ENCODE measurements at regions of chr7 and their contacts with region 1.

Region 1: DNA sequence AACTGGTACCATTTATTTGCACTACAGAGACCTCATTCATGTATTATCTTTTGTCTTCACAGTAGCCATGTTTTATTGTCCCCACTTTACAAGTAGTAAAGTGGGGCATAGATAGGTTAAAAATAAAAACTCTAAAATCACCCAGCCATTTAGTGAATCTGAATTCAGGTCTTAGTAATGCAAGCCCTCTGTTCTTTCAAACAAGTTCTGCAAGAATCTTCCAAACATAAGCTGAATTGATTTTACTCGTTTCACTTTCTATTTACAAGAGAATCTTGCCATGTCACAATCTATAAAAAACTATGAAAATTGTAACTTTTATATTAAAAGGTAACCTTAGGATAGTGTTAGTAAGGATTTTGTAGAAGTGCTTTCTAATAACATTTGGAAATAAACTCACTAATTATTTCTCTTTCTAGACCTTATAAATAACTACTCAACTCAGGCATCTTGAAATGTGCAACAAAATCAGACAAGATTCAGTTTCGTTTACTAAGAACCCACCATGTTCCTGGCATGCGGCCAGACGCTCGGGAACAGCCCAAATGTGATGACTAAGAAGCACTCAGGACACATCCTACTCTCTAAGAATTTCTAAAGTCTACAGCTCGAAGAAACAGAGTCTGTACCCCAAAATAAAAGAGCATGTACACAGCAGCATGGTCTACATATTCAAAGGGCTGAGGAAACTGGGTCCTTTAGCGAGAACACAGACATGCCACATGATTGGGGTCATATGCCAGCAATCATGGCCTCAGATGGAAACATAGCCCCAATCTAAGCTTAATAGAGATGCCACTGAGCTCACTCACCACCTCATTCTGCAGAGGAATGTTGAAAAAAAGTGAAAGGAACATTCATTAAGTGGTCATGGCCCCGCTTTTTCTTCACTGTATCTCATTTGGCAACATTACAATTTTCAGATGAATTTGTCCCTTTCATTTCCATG is 167.6 kb downstream of the AMPH start:
- DNase-seq: no peak
- H3K4me3 ChIP-seq: no peak overlapping the region
- H3K27ac ChIP-seq: no peak overlapping the region
- H3K4me1 ChIP-seq: no peaks in the 10 kb centered on the region
- H3K27me3 ChIP-seq: no peaks in the 10 kb centered on the region
- CTCF ChIP-seq: no peak
- POLR2A ChIP-seq: no peak

Region 2: GRCh38 chr7:36986429-36987362 is 1476.9 kb before region 1 on chr7:
- intact Hi-C with region 1: loop called (anchors 10 kb)
- DNase-seq: no peak
- H3K4me3 ChIP-seq: no peak overlapping the region
- H3K27ac ChIP-seq: no peak overlapping the region
- H3K4me1 ChIP-seq: no peaks in the 10 kb centered on the region
- H3K27me3 ChIP-seq: no peaks in the 10 kb centered on the region
- CTCF ChIP-seq: peak in 2 of 3 donors; percentile 67 to 69
- POLR2A ChIP-seq: no peak

Region 3: GRCh38 chr7:38704751-38705150 is 241.2 kb after region 1 on chr7:
- intact Hi-C with region 1: loop called (anchors 5 kb)
- DNase-seq: no peak
- H3K4me3 ChIP-seq: no peak overlapping the region
- H3K27ac ChIP-seq: no peak overlapping the region
- H3K4me1 ChIP-seq: no peaks in the 10 kb centered on the region
- H3K27me3 ChIP-seq: no peaks in the 10 kb centered on the region
- CTCF ChIP-seq: no peak
- POLR2A ChIP-seq: no peak